Tibial artery (tissue), 4 donors: ENCODE measurements at regions of chr2 and their contacts with region 1.

Region 1: GRCh38 chr2:115285416-115285815 is 843.0 kb downstream of the DPP10 start:
- DNase-seq: no peak
- H3K4me3 ChIP-seq: no peak overlapping the region
- H3K27ac ChIP-seq: no peak overlapping the region
- H3K4me1 ChIP-seq: no peaks in the 10 kb centered on the region
- H3K27me3 ChIP-seq: no peaks in the 10 kb centered on the region
- CTCF ChIP-seq: no peak

Region 2: DNA sequence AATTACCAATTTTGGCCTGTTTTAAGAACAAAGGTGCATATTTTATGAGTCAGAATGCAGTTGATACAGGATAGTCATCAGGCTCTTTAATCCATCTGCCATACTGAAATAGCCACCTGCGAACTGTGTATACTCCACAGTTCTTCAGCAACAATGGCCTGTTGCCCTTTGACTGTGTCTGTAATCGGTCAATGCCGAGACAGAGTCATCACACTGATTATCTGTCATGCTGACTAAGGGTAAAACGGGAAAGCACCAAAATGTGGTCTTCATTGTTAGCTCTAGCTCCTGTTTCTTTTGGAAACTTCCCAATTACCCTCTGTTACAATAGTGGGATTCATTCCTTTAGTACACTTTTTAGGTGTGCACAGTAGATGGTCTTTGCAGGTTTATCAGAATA is 28.7 kb after region 1 on chr2:
- intact Hi-C with region 1: loop called (anchors 2 kb)
- DNase-seq: no peak
- H3K4me3 ChIP-seq: no peak overlapping the region
- H3K27ac ChIP-seq: no peak overlapping the region
- H3K4me1 ChIP-seq: no peaks in the 10 kb centered on the region
- H3K27me3 ChIP-seq: no peaks in the 10 kb centered on the region
- CTCF ChIP-seq: no peak